Right lobe of liver (tissue), 6 donors: ENCODE measurements at regions of chrX and their contacts with region 1.

Region 1: DNA sequence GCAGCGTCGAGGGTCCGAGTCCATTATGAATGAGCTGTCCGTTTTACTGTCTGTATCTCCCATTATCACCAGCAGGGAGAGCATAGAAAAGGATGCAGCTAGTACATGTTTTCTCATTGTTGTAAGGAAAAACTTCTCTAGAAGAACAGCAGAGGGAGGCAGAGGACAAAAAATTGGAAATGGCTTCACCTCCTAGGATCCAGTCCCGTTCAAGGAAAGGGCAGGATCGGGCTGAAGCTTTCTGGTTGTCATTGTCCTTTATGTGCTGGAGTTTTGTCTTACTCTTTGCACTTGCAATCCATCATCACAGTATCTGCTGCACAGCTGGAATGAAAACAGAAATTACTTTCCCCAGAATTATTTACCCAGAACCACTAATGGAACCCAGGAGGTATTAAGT is 14.7 kb downstream of the NDP start:
- DNase-seq: no peak
- ATAC-seq: peak; percentile 92 to 99 (median 98)
- H3K4me3 ChIP-seq: no peak overlapping the region
- H3K27ac ChIP-seq: no peak overlapping the region
- H3K4me1 ChIP-seq: no peaks in the 10 kb centered on the region
- H3K27me3 ChIP-seq: no peaks in the 10 kb centered on the region
- CTCF ChIP-seq: peak; percentile 78 to 93 (median 80)
- POLR2A ChIP-seq: no peak

Region 2: GRCh38 chrX:45186643-45187026 is 1228.1 kb after region 1 on chrX:
- intact Hi-C with region 1: loop called in 1 of 2 experiments (anchors 10 kb)
- DNase-seq: no peak
- ATAC-seq: no peak
- H3K4me3 ChIP-seq: no peak overlapping the region
- H3K27ac ChIP-seq: no peak overlapping the region
- H3K4me1 ChIP-seq: no peaks in the 10 kb centered on the region
- H3K27me3 ChIP-seq: no peaks in the 10 kb centered on the region
- CTCF ChIP-seq: no peak
- POLR2A ChIP-seq: no peak